Activated naive CD4-positive, alpha-beta T cell treated with anti-CD3 and anti-CD28 coated beads for 36 hours (primary cell): ENCODE measurements at regions of chr19 and their contacts with region 1.

Region 1: DNA sequence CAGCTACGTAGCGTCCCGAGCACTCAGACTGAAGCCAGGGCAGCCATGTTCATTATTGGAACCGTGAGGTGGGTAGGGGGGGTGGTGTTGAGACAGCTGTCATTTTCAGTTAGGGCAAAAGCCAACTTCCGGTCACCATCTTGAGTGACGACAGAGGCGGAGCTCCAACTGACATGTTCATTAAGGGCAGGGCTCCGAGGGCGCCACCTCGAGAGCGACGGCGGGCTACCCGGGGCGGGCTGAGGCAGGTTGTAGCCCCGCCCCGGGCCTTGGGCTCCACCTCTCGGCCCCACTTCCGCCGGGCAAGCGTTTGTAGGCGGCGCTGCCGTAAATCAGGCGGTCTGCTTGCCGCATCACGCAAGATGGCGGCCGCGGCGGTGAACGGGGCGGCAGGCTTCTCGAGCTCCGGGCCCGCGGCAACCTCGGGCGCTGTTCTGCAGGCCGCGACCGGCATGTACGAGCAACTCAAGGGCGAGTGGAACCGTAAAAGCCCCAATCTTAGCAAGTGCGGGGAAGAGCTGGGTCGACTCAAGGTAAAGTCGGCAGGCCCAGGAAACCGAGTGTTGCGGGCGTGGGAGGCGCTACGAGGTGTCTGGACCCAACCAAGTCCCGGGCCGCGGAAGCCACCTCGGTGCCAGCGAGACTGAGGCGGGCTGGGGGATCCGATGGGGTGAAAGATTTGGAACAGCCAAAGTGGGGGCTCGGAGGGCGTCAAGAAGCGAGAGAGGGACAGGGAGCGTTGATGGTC is at the start of gene PSMD8:
- DNase-seq: peak; percentile 100
- H3K4me3 Mint-ChIP-seq: peak within 1 kb of the TSS; percentile 98
- H3K27ac Mint-ChIP-seq: peak within 1 kb of the TSS; percentile 93
- H3K4me1 Mint-ChIP-seq: peaks cover 32% of the 10 kb centered on the region
- H3K27me3 Mint-ChIP-seq: no peaks in the 10 kb centered on the region
- total RNA-seq, gene PSMD8: 194 to 204 TPM

Region 2: GRCh38 chr19:38263689-38264485 is 110.7 kb before region 1 on chr19:
- CTCF ChIA-PET with region 1: interaction called, 3 read pairs
- intact Hi-C with region 1: loop called (anchors 1 kb)
- DNase-seq: peak; percentile 86
- H3K4me3 Mint-ChIP-seq: peak overlapping the region; percentile 80
- H3K27ac Mint-ChIP-seq: peak overlapping the region; percentile 90
- H3K4me1 Mint-ChIP-seq: peaks cover 34% of the 10 kb centered on the region
- H3K27me3 Mint-ChIP-seq: peaks cover 3% of the 10 kb centered on the region

Region 3: DNA sequence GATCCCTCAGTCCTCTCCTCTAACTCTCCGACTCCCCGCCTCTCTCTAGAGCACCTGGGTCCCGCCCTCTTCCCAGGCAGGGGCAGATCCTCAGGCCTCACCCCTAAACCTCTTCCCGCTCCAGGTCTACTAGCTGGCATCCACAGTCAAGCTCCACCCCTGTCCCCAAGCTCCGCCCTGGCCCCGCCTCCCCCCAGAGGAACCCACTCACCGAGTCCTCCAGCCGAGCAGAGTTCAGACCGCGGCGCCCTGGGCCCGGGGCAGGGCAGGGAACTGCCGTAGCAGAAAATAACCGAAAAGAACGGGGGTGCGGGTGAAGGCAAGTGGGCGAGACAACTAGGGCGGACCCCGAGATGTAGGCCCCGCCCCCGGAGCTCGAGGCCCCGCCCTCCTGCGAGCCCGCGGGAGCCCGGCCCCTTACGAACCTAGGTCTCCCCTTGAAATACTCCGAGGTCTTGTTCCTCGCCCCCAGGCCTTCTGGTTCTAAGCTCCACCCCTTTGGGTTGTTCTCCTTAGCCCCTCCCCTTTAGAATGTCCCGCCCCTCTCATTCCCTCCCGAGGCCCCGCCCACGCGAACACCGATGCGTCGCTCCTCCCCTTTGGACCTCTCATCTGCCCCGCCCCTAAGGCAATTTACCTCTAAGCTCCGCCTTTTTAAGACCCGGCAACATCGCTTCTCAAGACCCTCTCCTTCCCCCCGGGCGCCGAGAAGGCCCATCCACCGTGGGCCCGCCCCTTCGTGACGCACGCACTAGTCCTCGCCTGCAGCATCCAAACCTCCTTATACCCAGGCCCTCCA is 13.1 kb after region 1 on chr19 and contains the start of gene GGN:
- CTCF ChIA-PET with region 1: interaction called, 3 read pairs
- intact Hi-C with region 1: loop called (anchors 1 kb)
- DNase-seq: peak; percentile 87
- H3K4me3 Mint-ChIP-seq: peak within 1 kb of the TSS; percentile 78
- H3K27ac Mint-ChIP-seq: no peak within 1 kb of the TSS
- H3K4me1 Mint-ChIP-seq: peaks cover 22% of the 10 kb centered on the region
- H3K27me3 Mint-ChIP-seq: peaks cover 18% of the 10 kb centered on the region
- total RNA-seq, gene GGN: 0.26 to 0.40 TPM